Natural killer cell (primary cell): ENCODE measurements at regions of chr9 and their contacts with region 1.

Region 1: GRCh38 chr9:98775831-98776441 is 20.4 kb downstream of the ANKS6 start:
- DNase-seq: peak in 1 of 2 donors; percentile 64
- ATAC-seq: peak; percentile 36 to 65 (median 54)
- H3K4me3 ChIP-seq: no peak overlapping the region
- H3K4me3 Mint-ChIP-seq: no peak overlapping the region
- H3K27ac ChIP-seq: no peak overlapping the region
- H3K27ac Mint-ChIP-seq: no peak overlapping the region
- H3K4me1 ChIP-seq: no peaks in the 10 kb centered on the region
- H3K4me1 Mint-ChIP-seq: peaks cover 0 to 7% of the 10 kb centered on the region in 2 donors
- H3K27me3 ChIP-seq: no peaks in the 10 kb centered on the region
- H3K27me3 Mint-ChIP-seq: no peaks in the 10 kb centered on the region
- CTCF ChIP-seq: peak; percentile 66

Region 2: GRCh38 chr9:98315551-98316060 is 460.3 kb before region 1 on chr9:
- intact Hi-C with region 1: loop called (anchors 2 kb)
- DNase-seq: peak; percentile 66 to 86
- ATAC-seq: peak; percentile 87 to 95 (median 88)
- H3K4me3 ChIP-seq: no peak overlapping the region
- H3K4me3 Mint-ChIP-seq: no peak overlapping the region
- H3K27ac ChIP-seq: no peak overlapping the region
- H3K27ac Mint-ChIP-seq: no peak overlapping the region
- H3K4me1 ChIP-seq: no peaks in the 10 kb centered on the region
- H3K4me1 Mint-ChIP-seq: peaks cover 0 to 5% of the 10 kb centered on the region in 2 donors
- H3K27me3 ChIP-seq: no peaks in the 10 kb centered on the region
- H3K27me3 Mint-ChIP-seq: peaks cover 0 to 3% of the 10 kb centered on the region in 2 donors
- CTCF ChIP-seq: peak; percentile 81

Region 3: GRCh38 chr9:98536542-98537173 is 239.3 kb before region 1 on chr9:
- intact Hi-C with region 1: loop called (anchors 10 kb)
- DNase-seq: peak in 1 of 2 donors; percentile 17
- ATAC-seq: peak in 1 of 3 donors; percentile 12
- H3K4me3 ChIP-seq: no peak overlapping the region
- H3K4me3 Mint-ChIP-seq: no peak overlapping the region
- H3K27ac ChIP-seq: no peak overlapping the region
- H3K27ac Mint-ChIP-seq: no peak overlapping the region
- H3K4me1 ChIP-seq: no peaks in the 10 kb centered on the region
- H3K4me1 Mint-ChIP-seq: no peaks in the 10 kb centered on the region
- H3K27me3 ChIP-seq: no peaks in the 10 kb centered on the region
- H3K27me3 Mint-ChIP-seq: peaks cover 5 to 10% of the 10 kb centered on the region in 2 donors
- CTCF ChIP-seq: no peak

Region 4: DNA sequence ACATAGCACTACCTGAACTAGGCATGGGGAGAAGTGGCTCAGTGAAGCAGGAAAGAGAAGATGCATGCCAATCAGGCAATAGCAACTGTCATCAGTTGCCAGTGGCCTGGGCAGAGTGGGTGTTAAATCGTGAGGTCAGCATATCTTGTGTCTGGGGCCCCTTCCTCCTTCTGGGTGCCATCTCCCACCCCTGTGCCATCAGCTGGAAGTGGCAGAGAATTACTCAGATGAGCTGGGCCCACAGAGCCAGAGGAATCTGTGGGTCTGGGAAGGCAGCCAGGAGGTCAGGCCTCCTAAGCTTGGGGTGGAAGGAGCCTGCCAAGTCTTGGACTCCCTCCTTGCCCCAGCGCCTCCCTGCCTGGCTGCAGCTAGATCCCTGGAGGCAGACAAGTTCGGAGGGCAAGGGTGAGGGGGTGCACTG is 98.0 kb after region 1 on chr9:
- intact Hi-C with region 1: no loop called
- DNase-seq: no peak
- ATAC-seq: no peak
- H3K4me3 ChIP-seq: no peak overlapping the region
- H3K4me3 Mint-ChIP-seq: no peak overlapping the region
- H3K27ac ChIP-seq: no peak overlapping the region
- H3K27ac Mint-ChIP-seq: no peak overlapping the region
- H3K4me1 ChIP-seq: no peaks in the 10 kb centered on the region
- H3K4me1 Mint-ChIP-seq: no peaks in the 10 kb centered on the region
- H3K27me3 ChIP-seq: no peaks in the 10 kb centered on the region
- H3K27me3 Mint-ChIP-seq: peaks cover 5 to 13% of the 10 kb centered on the region in 2 donors
- CTCF ChIP-seq: no peak

Region 5: DNA sequence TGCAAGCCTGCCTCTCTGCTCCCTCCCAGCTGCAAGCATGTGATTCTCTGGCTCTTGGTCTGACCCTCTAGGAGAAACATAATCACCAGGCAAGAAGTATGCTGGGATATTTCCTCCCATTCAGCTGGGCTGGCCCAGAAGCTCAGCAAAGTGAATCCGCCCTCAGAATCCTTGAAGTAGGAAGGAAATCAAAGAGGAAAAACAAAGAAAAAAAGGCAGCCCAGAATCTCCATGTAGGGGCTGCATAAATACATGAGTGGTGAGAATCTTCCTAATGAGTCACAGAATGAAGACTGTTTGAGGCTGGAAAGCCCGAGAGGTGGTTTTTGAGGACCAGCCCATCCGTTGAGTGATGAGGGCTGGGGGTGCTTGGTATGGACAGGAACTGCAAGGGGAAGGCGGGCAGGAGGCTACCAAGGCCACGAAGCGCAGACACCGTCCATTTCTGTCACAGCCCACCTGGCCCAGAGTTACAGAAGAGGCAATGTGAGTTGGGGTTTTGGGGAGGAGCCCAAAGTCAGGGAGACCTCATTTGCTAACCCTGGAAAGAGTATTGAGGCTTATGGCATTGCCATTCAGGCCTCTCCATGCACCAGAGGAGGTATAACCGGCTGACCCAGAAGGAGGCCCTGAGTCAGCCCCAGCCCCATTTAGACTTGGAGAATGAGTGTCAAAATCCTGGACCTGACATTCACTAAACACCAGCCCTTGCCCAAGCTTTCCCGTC is 295.5 kb after region 1 on chr9:
- intact Hi-C with region 1: no loop called
- DNase-seq: no peak
- ATAC-seq: peak in 2 of 3 donors; percentile 57 to 72
- H3K4me3 ChIP-seq: no peak overlapping the region
- H3K4me3 Mint-ChIP-seq: no peak overlapping the region
- H3K27ac ChIP-seq: no peak overlapping the region
- H3K27ac Mint-ChIP-seq: peak overlapping the region; percentile 78 to 86
- H3K4me1 ChIP-seq: peaks cover 43% of the 10 kb centered on the region
- H3K4me1 Mint-ChIP-seq: peaks cover 70 to 72% of the 10 kb centered on the region in 2 donors
- H3K27me3 ChIP-seq: no peaks in the 10 kb centered on the region
- H3K27me3 Mint-ChIP-seq: no peaks in the 10 kb centered on the region
- CTCF ChIP-seq: no peak